Activated CD8-positive, alpha-beta T cell treated with anti-CD3 and anti-CD28 coated beads, Interleukin-2, amount 10 ng/mL, durations not matched to agents 7 days and 5 days (primary cell): ENCODE measurements at regions of chr11 and their contacts with region 1.

Region 1: DNA sequence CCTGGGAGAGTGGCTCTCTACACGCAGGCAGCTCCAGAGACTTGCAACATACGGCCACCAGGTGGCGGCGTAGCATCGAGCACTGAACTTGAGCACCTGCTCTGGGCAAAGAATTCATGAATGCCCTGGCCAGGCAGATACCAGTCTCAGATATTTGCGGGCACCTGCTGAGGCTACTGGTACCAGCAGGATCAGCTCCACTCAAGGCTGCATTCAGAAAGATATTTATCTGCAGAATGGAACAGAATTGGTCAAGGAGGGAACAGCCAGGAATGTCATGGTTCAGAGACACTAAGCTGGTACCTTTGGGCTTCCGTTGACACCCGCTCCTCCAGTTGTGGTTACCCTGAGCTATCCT is 10.8 kb upstream of the CCDC86 start:
- DNase-seq: peak; percentile 88
- ATAC-seq: peak; percentile 97
- H3K4me3 Mint-ChIP-seq: no peak overlapping the region
- H3K27ac Mint-ChIP-seq: no peak overlapping the region
- H3K4me1 Mint-ChIP-seq: peaks cover 22% of the 10 kb centered on the region
- H3K27me3 Mint-ChIP-seq: peaks cover 14% of the 10 kb centered on the region

Region 2: DNA sequence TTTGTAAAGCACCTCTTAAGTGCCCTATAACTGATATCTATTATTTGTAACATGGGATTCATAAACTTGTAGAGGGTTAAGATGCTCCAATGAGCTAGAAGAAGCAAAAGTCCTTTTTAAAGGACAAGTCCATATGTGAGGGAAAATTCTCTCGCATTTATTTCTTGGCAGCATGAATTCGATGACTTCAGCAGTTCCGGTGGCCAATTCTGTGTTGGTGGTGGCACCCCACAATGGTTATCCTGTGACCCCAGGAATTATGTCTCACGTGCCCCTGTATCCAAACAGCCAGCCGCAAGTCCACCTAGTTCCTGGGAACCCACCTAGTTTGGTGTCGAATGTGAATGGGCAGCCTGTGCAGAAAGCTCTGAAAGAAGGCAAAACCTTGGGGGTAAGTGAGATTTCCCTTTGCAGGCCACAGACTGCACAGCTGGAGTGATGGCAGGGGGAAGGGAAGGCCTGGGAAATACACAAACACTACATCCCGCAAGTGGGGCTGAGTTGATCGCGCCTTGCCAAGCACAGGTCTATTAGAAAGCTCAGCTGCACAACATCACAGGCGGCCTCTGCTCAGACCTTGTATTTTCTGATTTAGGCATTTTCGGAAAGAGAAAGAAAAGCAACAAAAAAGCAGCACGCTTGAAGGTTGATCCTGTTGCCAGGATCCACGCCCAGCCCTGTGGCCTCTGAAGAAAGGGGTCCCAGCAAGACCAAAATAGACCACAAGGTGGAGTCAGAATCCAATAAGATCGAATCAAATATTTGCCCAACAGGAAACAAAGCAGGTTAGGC is 130.2 kb before region 1 on chr11:
- CTCF ChIA-PET with region 1: no interaction called
- POLR2A ChIA-PET with region 1: no interaction called
- DNase-seq: no peak
- ATAC-seq: no peak
- H3K4me3 Mint-ChIP-seq: no peak overlapping the region
- H3K27ac Mint-ChIP-seq: no peak overlapping the region
- H3K4me1 Mint-ChIP-seq: no peaks in the 10 kb centered on the region
- H3K27me3 Mint-ChIP-seq: peaks cover 9% of the 10 kb centered on the region

Region 3: GRCh38 chr11:60775420-60775961 is 55.6 kb before region 1 on chr11:
- CTCF ChIA-PET with region 1: interaction called, 18 read pairs
- POLR2A ChIA-PET with region 1: no interaction called
- DNase-seq: peak; percentile 90
- ATAC-seq: peak; percentile 92
- H3K4me3 Mint-ChIP-seq: no peak overlapping the region
- H3K27ac Mint-ChIP-seq: no peak overlapping the region
- H3K4me1 Mint-ChIP-seq: peaks cover 7% of the 10 kb centered on the region
- H3K27me3 Mint-ChIP-seq: peaks cover 13% of the 10 kb centered on the region

Region 4: GRCh38 chr11:60847281-60847680 is 16.2 kb after region 1 on chr11:
- CTCF ChIA-PET with region 1: interaction called, 10 read pairs
- POLR2A ChIA-PET with region 1: no interaction called
- DNase-seq: no peak
- ATAC-seq: no peak
- H3K4me3 Mint-ChIP-seq: no peak overlapping the region
- H3K27ac Mint-ChIP-seq: no peak overlapping the region
- H3K4me1 Mint-ChIP-seq: peaks cover 31% of the 10 kb centered on the region
- H3K27me3 Mint-ChIP-seq: no peaks in the 10 kb centered on the region

Region 5: GRCh38 chr11:60872961-60873524 is 41.9 kb after region 1 on chr11:
- CTCF ChIA-PET with region 1: interaction called, 86 read pairs
- POLR2A ChIA-PET with region 1: interaction called, 4 read pairs
- DNase-seq: no peak
- ATAC-seq: no peak
- H3K4me3 Mint-ChIP-seq: no peak overlapping the region
- H3K27ac Mint-ChIP-seq: peak overlapping the region; percentile 87
- H3K4me1 Mint-ChIP-seq: peaks cover 68% of the 10 kb centered on the region
- H3K27me3 Mint-ChIP-seq: no peaks in the 10 kb centered on the region

Region 6: DNA sequence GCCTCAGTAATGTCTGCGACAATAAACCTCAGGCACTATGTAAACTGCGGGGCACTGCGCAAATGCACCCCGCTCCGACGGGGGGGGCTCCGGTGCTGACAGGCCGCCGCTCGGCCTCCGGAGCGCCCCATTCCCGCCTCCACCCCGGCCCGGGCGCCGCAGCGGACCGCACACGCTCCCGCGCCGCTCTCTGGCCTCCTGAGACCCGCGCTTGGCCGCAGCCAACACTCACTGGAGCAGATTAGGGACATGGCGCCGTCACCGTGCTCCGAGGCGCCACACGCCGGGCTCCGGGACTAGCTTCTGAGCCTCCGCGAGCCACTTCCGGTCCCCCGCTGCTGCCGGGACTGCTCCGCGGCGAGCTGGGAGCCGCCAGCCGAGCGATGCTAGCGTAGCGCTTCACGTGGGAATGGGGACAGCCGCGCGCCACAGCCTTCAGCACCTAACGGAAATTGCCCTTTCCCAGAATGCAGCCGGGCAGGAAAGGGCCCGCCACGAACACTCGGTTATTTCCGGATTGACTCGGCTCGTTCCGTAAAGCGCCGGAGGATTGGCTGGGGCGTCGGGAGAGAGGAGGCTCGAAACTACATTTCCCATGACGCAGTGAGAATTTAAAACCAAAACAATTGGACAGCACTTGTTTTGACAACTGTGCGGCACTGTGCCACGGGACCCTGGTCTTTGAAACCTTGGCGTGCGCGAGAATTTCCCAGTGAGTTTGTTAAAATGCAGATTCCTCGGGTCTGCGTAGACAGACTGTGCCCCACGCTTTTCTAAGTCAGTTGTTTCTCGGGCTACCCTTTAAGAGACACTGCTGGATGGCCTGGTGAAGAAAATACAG is 75.2 kb after region 1 on chr11 and contains the start of gene PRPF19:
- CTCF ChIA-PET with region 1: interaction called, 187 read pairs
- POLR2A ChIA-PET with region 1: interaction called, 4 read pairs
- DNase-seq: peak; percentile 99
- ATAC-seq: peak; percentile 93
- H3K4me3 Mint-ChIP-seq: peak within 1 kb of the TSS; percentile 80
- H3K27ac Mint-ChIP-seq: peak within 1 kb of the TSS; percentile 89
- H3K4me1 Mint-ChIP-seq: peaks cover 48% of the 10 kb centered on the region
- H3K27me3 Mint-ChIP-seq: peaks cover 7% of the 10 kb centered on the region
- total RNA-seq, gene PRPF19: 161 TPM